ENCODE measurements at regions of chr2 and their contacts with region 1.

Region 1: DNA sequence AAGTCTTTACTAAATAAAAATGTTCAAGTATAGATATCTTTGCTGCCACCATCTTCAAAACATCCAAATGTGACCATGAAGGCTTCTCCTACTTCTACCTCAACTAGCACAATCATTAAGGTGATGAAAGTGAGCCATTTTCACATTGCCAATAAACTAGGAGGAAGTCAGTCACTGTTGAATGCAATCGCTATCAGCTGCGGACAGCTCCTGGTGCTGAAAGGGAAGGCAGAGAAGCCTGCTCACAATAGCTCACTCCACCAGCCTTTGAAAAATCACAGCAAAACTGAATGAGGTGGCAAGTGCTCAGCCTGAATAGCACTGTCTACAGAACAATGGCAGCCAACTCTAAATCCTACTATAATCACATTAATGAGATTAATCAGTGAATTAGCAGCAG is 2.2 kb downstream of the MYT1L start:
- DNase-seq: no peak

Region 2: DNA sequence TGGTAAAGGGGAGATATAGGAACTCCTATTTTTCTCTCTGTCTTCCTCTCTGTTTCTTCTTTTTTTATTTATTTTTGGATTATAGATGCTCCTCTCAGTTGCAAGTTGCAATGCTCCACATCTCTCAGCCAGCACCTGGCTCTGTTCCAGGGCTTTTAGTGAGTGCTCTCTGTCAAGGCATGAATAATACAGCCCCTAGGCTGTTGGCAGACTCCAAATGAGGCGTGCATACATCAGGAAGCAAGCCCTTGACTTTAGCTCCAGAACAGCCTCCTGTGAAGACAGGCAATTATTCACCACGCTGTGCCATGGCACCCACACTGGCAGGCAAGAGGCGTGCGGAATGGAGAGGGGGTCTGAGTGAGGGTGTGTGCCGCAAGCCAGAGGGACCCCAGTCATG is 356.4 kb before region 1 on chr2:
- intact Hi-C with region 1: no loop called
- DNase-seq: no peak

Region 3: DNA sequence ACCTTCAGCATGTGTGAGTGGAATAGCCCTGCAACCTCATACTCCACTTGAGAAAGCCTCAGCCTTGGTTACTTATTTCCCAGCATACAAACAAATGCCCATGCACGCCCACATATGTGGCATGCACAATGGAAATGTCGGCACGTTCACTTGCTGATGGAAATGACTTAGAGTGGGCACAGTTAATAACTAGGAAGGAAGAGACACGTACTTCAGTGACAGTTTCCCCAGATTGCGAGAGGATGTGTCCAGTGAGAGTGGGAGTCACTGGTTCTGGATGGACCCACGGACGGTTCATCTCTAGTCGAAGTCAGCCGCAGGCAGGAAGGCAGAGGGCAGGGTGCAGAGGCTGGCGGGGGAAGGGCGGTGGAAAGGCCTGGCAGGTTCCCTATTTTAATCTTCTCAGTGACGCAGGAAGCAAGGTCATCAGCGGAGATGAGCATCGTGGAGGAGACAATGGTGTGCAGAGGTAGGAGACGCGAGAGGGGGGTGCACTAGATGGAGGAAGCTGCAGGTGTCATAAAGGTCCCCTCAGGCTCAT is 352.9 kb after region 1 on chr2:
- intact Hi-C with region 1: loop called in 1 of 2 experiments (anchors 10 kb)
- DNase-seq: peak; percentile 61

Measured in posterior vena cava (tissue), 2 donors.